ENCODE measurements at regions of chr13 and their contacts with region 1.

Region 1: DNA sequence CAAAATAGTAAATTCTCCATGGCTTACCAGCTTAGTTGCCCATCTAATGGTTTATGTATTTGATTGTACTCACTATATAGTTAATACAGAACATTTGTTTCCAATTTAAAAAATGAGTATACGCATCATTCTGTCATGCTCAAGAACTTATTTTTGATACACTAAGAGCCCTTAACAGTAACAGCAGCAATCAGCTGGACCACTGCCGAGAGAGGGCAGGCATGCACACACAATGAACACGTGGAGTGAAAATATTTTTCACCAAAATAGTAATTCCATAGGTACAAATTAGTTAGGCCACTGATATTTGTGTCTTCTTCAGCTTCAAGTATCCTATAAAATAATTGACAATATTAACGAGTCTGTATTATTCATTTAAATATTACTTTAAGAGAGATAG is 109.9 kb downstream of the KLF12 start:
- DNase-seq: no peak
- H3K4me3 ChIP-seq: no peak overlapping the region
- H3K27ac ChIP-seq: no peak overlapping the region
- H3K4me1 ChIP-seq: no peaks in the 10 kb centered on the region
- H3K27me3 ChIP-seq: no peaks in the 10 kb centered on the region
- CTCF ChIP-seq: no peak
- POLR2A ChIP-seq: no peak

Region 2: GRCh38 chr13:73835138-73835721 is 189.1 kb before region 1 on chr13:
- intact Hi-C with region 1: no loop called
- DNase-seq: no peak
- H3K4me3 ChIP-seq: no peak overlapping the region
- H3K27ac ChIP-seq: no peak overlapping the region
- H3K4me1 ChIP-seq: no peaks in the 10 kb centered on the region
- H3K27me3 ChIP-seq: no peaks in the 10 kb centered on the region
- CTCF ChIP-seq: peak; percentile 67 to 74 (median 69)
- POLR2A ChIP-seq: no peak

Region 3: DNA sequence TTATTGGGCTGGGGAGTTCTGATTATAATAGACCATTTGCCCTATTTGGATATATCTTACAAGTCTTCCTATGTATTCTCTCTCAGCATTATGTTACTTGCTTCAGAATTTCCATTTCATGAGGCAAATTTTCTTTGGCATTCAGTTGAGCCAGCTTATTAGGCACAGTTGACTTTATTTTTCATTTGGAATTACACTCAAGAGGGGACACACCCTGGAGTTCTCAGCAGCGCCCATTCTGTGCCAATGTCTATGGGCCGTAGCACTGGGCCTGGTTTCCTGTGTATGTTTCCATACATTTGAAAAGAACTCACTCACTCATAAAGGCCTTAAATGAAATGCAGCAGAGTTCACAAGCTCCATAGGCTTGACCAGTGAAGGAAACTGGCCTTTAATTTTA is 28.6 kb before region 1 on chr13:
- intact Hi-C with region 1: loop called (anchors 2 kb)
- DNase-seq: no peak
- H3K4me3 ChIP-seq: no peak overlapping the region
- H3K27ac ChIP-seq: no peak overlapping the region
- H3K4me1 ChIP-seq: peaks cover 0 to 4% of the 10 kb centered on the region in 2 donors
- H3K27me3 ChIP-seq: no peaks in the 10 kb centered on the region
- CTCF ChIP-seq: no peak
- POLR2A ChIP-seq: no peak

Region 4: DNA sequence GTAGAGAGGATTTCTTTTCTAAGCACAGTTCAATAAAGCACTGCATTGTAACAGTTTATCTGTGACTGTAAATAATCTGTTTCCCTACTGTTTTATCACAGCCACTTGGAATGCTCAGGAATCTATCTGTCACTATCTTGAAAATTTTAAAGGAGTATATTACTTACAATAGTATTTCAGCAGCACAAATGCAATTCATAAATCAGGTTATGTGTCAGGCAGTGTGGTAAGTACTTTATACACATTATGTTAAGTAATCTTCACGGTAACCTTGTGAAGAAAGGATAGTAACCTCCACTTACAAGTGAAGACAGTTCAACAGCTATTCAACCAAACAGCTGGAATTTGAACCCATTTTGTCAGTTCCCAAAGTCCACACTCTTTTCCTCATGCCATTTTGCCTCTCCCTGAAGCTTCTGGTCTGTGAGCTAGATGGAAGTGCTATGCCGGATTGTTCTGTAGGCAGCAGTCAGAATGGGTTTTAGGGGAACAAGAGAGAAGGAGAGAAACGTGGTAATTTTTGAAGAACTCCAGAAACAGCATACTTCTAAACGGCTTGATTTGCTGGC is 15.1 kb before region 1 on chr13:
- intact Hi-C with region 1: no loop called
- DNase-seq: no peak
- H3K4me3 ChIP-seq: no peak overlapping the region
- H3K27ac ChIP-seq: no peak overlapping the region
- H3K4me1 ChIP-seq: no peaks in the 10 kb centered on the region
- H3K27me3 ChIP-seq: no peaks in the 10 kb centered on the region
- CTCF ChIP-seq: no peak
- POLR2A ChIP-seq: no peak

Region 5: GRCh38 chr13:74036373-74036772 is 12.1 kb after region 1 on chr13:
- intact Hi-C with region 1: no loop called
- DNase-seq: peak; percentile 65 to 86
- H3K4me3 ChIP-seq: no peak overlapping the region
- H3K27ac ChIP-seq: peak overlapping the region; percentile 69 to 81
- H3K4me1 ChIP-seq: peaks cover 0 to 5% of the 10 kb centered on the region in 2 donors
- H3K27me3 ChIP-seq: no peaks in the 10 kb centered on the region
- CTCF ChIP-seq: no peak
- POLR2A ChIP-seq: no peak

Region 6: GRCh38 chr13:74062933-74063332 is 38.6 kb after region 1 on chr13:
- intact Hi-C with region 1: no loop called
- DNase-seq: no peak
- H3K4me3 ChIP-seq: peak overlapping the region in 2 of 3 donors; percentile 20 to 52
- H3K27ac ChIP-seq: peak overlapping the region; percentile 4 to 67
- H3K4me1 ChIP-seq: no peaks in the 10 kb centered on the region
- H3K27me3 ChIP-seq: no peaks in the 10 kb centered on the region
- CTCF ChIP-seq: no peak
- POLR2A ChIP-seq: no peak

Measured in breast epithelium (tissue), 4 donors.